K562 (cell line): ENCODE measurements at regions of chr1 and their contacts with region 1.

Region 1: DNA sequence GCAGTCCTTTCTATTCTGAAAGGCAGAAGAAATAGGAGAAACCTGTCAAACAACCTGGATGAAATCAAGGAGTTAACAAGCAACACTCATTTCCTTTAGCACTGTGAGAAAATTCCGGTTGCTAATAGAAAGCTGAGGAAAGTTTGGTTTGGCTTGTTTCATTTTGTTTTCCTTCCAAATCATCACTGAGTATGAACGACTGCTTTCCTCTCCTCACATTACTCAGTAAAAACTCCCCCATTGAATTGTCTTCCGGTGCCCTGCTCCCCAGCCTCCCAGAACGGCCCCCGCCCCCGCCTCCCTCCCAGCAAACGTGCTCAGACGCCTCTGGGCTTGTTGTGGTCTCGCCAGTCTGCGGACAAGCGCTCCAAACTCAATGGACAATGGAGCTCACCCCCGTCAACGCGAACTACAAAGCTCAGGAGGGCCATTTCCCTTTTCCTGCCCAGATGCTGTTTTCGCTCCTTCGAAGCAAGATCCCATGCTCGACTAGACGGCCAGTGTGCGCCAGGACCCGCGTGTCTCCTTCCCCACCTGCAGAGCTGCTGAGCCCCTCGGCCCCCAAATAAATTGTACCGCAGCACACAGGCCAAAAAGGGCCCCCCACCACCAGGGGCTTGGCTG is 747 bp downstream of the STX6 start:
- DNase-seq: peak; percentile 65 to 91 (median 78)
- ATAC-seq: peak; percentile 84
- H3K4me3 ChIP-seq: peak overlapping the region; percentile 94
- H3K27ac ChIP-seq: peak overlapping the region; percentile 81
- H3K4me1 ChIP-seq: peaks cover 8 to 10% of the 10 kb centered on the region in 2 experiments; a peak in 3 of 5 replicates
- H3K27me3 ChIP-seq: no peaks in the 10 kb centered on the region; a peak in 1 of 5 replicates
- CTCF ChIP-seq: no peak
- EP300 ChIP-seq: no peak
- POLR2A ChIP-seq: 0 out of 2 replicates have a peak, but pooled peaks have one; percentile 69
- RAD21 ChIP-seq: no peak

Region 2: DNA sequence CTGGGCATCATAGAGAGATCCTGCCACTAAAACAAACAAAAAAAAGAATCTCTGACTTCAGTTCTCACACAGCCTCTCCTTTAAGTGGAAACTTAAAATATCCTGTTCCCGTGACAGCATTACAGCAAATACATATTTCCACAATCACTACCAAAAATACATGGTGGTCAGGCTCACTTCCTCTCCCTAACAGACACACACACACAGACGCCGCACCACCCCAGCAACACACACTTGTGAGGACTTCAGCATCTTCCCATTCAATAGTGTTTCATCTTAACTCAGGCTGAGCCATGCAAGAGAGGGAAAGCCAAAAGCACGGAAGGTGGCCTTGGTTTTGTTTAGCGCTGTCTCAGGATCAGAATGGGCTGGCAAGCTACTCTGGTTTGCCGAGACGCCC is 87.4 kb before region 1 on chr1:
- CTCF ChIA-PET with region 1: no interaction called
- POLR2A ChIA-PET with region 1: no interaction called
- in situ Hi-C with region 1: no loop called
- intact Hi-C with region 1: loop called (anchors 5 kb)
- DNase-seq: no peak
- ATAC-seq: no peak
- H3K4me3 ChIP-seq: no peak overlapping the region
- H3K27ac ChIP-seq: no peak overlapping the region
- H3K4me1 ChIP-seq: peaks cover 15 to 36% of the 10 kb centered on the region in 2 experiments; a peak in 4 of 5 replicates
- H3K27me3 ChIP-seq: peaks cover 3 to 4% of the 10 kb centered on the region in 2 experiments; a peak in 1 of 5 replicates
- CTCF ChIP-seq: no peak
- EP300 ChIP-seq: no peak
- POLR2A ChIP-seq: no peak
- RAD21 ChIP-seq: no peak

Region 3: GRCh38 chr1:180969434-180969833 is 52.5 kb before region 1 on chr1:
- CTCF ChIA-PET with region 1: no interaction called
- POLR2A ChIA-PET with region 1: no interaction called
- in situ Hi-C with region 1: no loop called
- intact Hi-C with region 1: no loop called
- DNase-seq: no peak
- ATAC-seq: no peak
- H3K4me3 ChIP-seq: no peak overlapping the region
- H3K27ac ChIP-seq: no peak overlapping the region
- H3K4me1 ChIP-seq: peaks cover 3 to 11% of the 10 kb centered on the region in 2 experiments; a peak in 4 of 5 replicates
- H3K27me3 ChIP-seq: no peaks in the 10 kb centered on the region
- CTCF ChIP-seq: no peak
- EP300 ChIP-seq: no peak
- POLR2A ChIP-seq: no peak
- RAD21 ChIP-seq: no peak

Region 4: GRCh38 chr1:181010789-181011188 is 11.1 kb before region 1 on chr1:
- CTCF ChIA-PET with region 1: no interaction called
- POLR2A ChIA-PET with region 1: interaction called, 12 read pairs
- in situ Hi-C with region 1: no loop called
- intact Hi-C with region 1: no loop called
- DNase-seq: no peak
- ATAC-seq: no peak
- H3K4me3 ChIP-seq: no peak overlapping the region
- H3K27ac ChIP-seq: no peak overlapping the region
- H3K4me1 ChIP-seq: peaks cover 0 to 8% of the 10 kb centered on the region in 2 experiments; a peak in 1 of 5 replicates
- H3K27me3 ChIP-seq: no peaks in the 10 kb centered on the region
- CTCF ChIP-seq: no peak
- EP300 ChIP-seq: no peak
- POLR2A ChIP-seq: no peak
- RAD21 ChIP-seq: no peak

Region 5: DNA sequence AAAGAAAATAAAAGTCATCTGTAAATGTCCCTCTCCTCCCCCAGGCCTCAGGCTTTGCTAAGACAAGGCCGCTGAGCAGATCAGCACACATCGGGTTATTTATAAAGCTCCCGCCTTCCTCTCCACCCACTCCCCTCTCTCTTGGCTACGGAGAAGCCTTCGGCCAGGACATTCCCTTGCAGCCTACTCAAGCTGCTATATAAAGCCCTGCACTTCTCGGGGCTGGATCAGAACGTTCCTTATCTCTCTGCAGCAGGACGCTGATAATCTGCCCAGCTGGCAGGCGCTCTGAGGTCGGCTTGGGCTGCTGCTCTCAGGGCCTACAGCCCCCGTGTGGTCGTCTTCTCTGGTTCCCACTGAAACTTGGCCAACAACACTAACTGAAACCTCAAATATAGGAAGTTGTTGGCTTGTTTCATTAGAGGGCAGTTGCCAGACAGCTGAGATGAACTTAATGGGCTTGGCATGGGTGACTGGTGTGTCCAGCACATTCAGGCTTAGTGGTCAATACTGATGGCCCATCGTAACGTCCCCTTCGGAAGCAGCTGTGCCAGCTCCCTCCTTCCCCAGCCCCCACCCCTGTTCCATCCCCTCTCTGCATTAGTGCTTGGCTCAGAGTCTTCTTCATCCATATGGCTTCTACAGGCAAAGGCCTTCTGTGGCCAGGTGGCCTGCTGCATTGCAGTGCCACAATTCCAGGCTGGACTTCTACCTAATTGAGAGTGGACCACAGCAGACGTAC is 131.1 kb after region 1 on chr1:
- CTCF ChIA-PET with region 1: no interaction called
- POLR2A ChIA-PET with region 1: no interaction called
- in situ Hi-C with region 1: no loop called
- intact Hi-C with region 1: loop called (anchors 1 kb)
- DNase-seq: peak; percentile 90 to 99 (median 94)
- ATAC-seq: peak; percentile 98
- H3K4me3 ChIP-seq: no peak overlapping the region
- H3K27ac ChIP-seq: peak overlapping the region; percentile 65
- H3K4me1 ChIP-seq: peaks cover 27 to 31% of the 10 kb centered on the region in 2 experiments
- H3K27me3 ChIP-seq: no peaks in the 10 kb centered on the region
- CTCF ChIP-seq: peak; percentile 71 to 86 (median 80)
- EP300 ChIP-seq: peak; percentile 99
- POLR2A ChIP-seq: no peak
- RAD21 ChIP-seq: peak; percentile 78 to 79